ENCODE measurements at regions of chr3 and their contacts with region 1.

Region 1: DNA sequence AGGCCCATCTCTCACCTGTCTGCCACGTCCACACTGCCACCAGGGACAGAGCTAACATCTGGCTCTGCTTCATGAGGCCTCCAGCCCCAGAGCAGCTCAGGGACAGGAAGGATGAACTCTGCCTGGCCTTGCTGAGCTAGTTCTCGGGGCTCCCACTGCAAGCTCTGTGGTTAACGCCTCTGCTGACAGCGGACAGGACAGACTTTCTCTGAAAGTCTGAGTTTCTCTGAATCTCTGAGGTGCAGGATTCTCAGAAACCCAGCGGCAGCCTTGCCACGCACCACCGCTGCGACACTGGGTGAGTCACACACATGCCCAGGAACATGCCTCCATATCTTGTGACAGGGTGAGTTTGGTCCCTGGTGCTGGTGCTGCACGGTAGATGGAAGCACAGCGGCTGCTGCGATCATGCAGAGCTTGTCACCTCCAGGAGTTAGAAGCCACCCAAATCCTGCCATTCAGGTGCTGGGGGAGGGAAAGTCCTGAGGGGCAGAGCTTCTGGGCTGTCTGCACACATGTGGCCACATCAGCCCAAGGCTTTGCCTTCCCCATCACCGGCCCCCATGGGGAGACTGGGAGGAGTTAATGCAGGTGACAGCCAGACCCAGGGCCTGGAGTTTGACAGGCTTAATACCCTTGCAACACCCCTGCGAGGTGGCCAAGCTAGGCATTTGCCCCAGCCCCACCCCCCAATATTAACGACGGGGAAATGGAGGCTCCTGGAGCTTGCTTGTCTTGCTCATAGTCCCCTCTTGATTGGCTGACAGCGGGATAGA is 267.0 kb downstream of the PLCL2 start:
- DNase-seq: peak; percentile 89
- H3K4me3 Mint-ChIP-seq: peak overlapping the region; percentile 60
- H3K27ac Mint-ChIP-seq: peak overlapping the region; percentile 85
- H3K4me1 Mint-ChIP-seq: peaks cover 45% of the 10 kb centered on the region
- H3K27me3 Mint-ChIP-seq: peaks cover 4% of the 10 kb centered on the region

Region 2: GRCh38 chr3:16828815-16829214 is 323.0 kb before region 1 on chr3:
- intact Hi-C with region 1: loop called (anchors 1 kb)
- DNase-seq: peak; percentile 22
- H3K4me3 Mint-ChIP-seq: no peak overlapping the region
- H3K27ac Mint-ChIP-seq: no peak overlapping the region
- H3K4me1 Mint-ChIP-seq: peaks cover 21% of the 10 kb centered on the region
- H3K27me3 Mint-ChIP-seq: peaks cover 17% of the 10 kb centered on the region

Region 3: GRCh38 chr3:16906682-16907081 is 245.1 kb before region 1 on chr3:
- intact Hi-C with region 1: loop called (anchors 5 kb)
- DNase-seq: no peak
- H3K4me3 Mint-ChIP-seq: peak overlapping the region; percentile 51
- H3K27ac Mint-ChIP-seq: no peak overlapping the region
- H3K4me1 Mint-ChIP-seq: peaks cover 76% of the 10 kb centered on the region
- H3K27me3 Mint-ChIP-seq: no peaks in the 10 kb centered on the region

Region 4: GRCh38 chr3:17077606-17078005 is 74.2 kb before region 1 on chr3:
- intact Hi-C with region 1: loop called (anchors 1 kb)
- DNase-seq: no peak
- H3K4me3 Mint-ChIP-seq: no peak overlapping the region
- H3K27ac Mint-ChIP-seq: peak overlapping the region; percentile 73
- H3K4me1 Mint-ChIP-seq: peaks cover 68% of the 10 kb centered on the region
- H3K27me3 Mint-ChIP-seq: no peaks in the 10 kb centered on the region

Region 5: GRCh38 chr3:17195856-17196604 is 44.2 kb after region 1 on chr3:
- intact Hi-C with region 1: loop called (anchors 1 kb)
- DNase-seq: no peak
- H3K4me3 Mint-ChIP-seq: no peak overlapping the region
- H3K27ac Mint-ChIP-seq: no peak overlapping the region
- H3K4me1 Mint-ChIP-seq: peaks cover 17% of the 10 kb centered on the region
- H3K27me3 Mint-ChIP-seq: peaks cover 1% of the 10 kb centered on the region

Region 6: GRCh38 chr3:17262990-17263389 is 111.2 kb after region 1 on chr3:
- intact Hi-C with region 1: no loop called
- DNase-seq: no peak
- H3K4me3 Mint-ChIP-seq: no peak overlapping the region
- H3K27ac Mint-ChIP-seq: no peak overlapping the region
- H3K4me1 Mint-ChIP-seq: no peaks in the 10 kb centered on the region
- H3K27me3 Mint-ChIP-seq: peaks cover 3% of the 10 kb centered on the region

Measured in activated T-helper 1 cell treated with anti-CD3 and anti-CD28 coated beads, Interleukin-12 subunit alpha, Interleukin-12 subunit beta, Interleukin-2, Interleukin-4 antibody, amounts not matched to agents 30 ng/mL and 10 ng/mL and 1 ng/mL, durations not matched to agents 14 hours and 24 hours and 36 hours (primary cell).